Naive thymus-derived CD4-positive, alpha-beta T cell (primary cell): ENCODE measurements at regions of chr12 and their contacts with region 1.

Region 1: DNA sequence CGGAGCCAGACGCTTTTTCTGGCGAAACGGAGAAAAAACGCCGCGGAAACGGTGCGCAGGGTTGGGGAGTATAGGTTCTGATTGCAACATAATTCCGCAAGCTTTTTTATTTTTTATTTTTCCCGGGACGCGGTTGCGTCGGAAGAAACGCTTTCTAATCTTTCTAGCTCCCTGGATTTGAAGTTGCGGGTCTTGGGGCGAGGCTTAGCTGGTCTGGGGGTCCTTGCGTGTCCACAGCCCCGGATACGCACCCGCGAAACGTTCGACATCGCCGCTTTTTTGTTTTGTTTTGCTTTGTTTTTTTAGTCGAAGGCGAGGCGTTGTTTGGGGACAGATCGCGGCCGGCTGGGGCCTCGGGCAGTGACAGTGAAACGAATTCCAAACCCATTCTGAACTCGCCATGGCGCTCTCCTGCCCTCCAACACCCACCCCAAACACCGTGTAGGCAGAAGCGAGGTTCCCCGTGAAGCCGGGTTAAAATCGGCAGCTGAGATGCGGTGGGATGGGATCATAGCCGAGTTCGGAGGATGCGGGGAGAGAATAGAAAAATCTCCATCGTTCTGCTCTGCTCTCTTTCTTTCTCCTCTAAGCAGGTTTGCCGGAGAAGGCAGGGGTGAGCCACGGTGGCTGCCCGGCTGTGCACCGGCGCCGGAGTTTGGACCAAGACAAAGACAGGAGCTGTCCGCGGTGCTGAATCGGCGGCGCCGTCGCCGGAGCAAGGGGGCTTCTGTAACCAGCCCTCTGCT is 8.1 kb upstream of the LHX5 start:
- DNase-seq: peak in 7 of 9 donors; percentile 16 to 58 (median 34)
- ATAC-seq: no peak
- H3K4me3 ChIP-seq: no peak overlapping the region
- H3K4me3 Mint-ChIP-seq: peak overlapping the region in 7 of 10 donors; percentile 16 to 51 (median 25)
- H3K27ac ChIP-seq: no peak overlapping the region
- H3K27ac Mint-ChIP-seq: peak overlapping the region in 2 of 9 donors; percentile 43 to 89
- H3K4me1 ChIP-seq: no peaks in the 10 kb centered on the region
- H3K4me1 Mint-ChIP-seq: peaks cover 5 to 17% (median 12%) of the 10 kb centered on the region in 7 donors
- H3K27me3 ChIP-seq: peaks cover 0 to 14% of the 10 kb centered on the region in 2 donors
- H3K27me3 Mint-ChIP-seq: peaks cover 74 to 89% (median 82%) of the 10 kb centered on the region in 5 donors

Region 2: GRCh38 chr12:112916270-112916669 is 563.5 kb before region 1 on chr12:
- CTCF ChIA-PET with region 1: no interaction called
- POLR2A ChIA-PET with region 1: no interaction called
- intact Hi-C with region 1: no loop called
- DNase-seq: no peak
- ATAC-seq: no peak
- H3K4me3 ChIP-seq: no peak overlapping the region
- H3K4me3 Mint-ChIP-seq: no peak overlapping the region
- H3K27ac ChIP-seq: no peak overlapping the region
- H3K27ac Mint-ChIP-seq: no peak overlapping the region
- H3K4me1 ChIP-seq: peaks cover 0 to 4% of the 10 kb centered on the region in 2 donors
- H3K4me1 Mint-ChIP-seq: peaks cover 6 to 37% (median 25%) of the 10 kb centered on the region in 7 donors
- H3K27me3 ChIP-seq: no peaks in the 10 kb centered on the region
- H3K27me3 Mint-ChIP-seq: no peaks in the 10 kb centered on the region

Region 3: DNA sequence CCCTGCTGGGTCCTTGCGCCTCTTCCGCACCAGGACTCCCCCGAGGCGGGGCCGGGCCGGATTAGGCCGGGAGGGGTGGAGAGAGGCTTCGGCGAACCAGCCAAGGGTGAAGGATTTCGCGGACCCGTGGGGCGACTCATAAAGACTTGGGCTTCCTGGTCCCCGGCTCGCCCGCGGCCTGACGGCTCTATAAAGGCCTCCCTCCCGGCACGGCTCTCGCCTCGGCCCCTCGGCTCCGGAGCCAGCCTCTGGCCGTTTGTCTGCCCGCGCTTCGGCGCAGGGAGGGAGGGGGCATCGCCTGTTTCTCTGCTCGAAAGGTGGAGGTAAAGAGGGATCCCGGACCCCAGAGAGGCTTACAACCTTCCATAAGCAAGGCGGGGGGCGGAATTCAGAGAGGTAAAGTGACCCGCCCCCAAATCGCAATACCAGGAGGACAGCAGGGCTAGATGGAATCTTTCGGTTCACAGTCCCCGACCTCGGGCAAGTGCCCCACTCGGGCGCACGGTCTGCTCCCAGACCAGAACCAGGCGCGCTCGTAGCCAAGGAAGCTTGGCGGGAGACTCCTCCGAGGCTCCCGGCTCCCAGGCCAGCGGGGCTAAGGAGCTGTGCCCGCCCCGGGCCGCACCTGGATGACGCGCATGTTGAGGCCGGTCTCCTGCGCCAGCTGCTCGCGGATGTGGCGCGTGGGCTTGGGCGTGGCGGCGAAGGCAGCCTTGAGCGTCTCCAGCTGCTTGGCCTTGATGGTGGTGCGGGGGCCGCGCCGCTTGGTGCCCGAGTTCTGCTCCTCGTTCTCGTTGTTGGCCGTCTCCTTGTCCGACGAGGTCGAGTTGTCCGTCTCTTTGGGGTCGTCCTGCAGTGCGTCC is 12.0 kb before region 1 on chr12:
- CTCF ChIA-PET with region 1: no interaction called
- POLR2A ChIA-PET with region 1: no interaction called
- intact Hi-C with region 1: loop called in 1 of 2 experiments (anchors 2 kb)
- DNase-seq: no peak
- ATAC-seq: no peak
- H3K4me3 ChIP-seq: no peak overlapping the region
- H3K4me3 Mint-ChIP-seq: peak overlapping the region in 4 of 10 donors; percentile 16 to 59 (median 43)
- H3K27ac ChIP-seq: no peak overlapping the region
- H3K27ac Mint-ChIP-seq: peak overlapping the region in 1 of 9 donors; percentile 23
- H3K4me1 ChIP-seq: peaks cover 6 to 17% of the 10 kb centered on the region in 2 donors
- H3K4me1 Mint-ChIP-seq: peaks cover 10 to 32% (median 25%) of the 10 kb centered on the region in 7 donors
- H3K27me3 ChIP-seq: peaks cover 5% of the 10 kb centered on the region in 2 donors
- H3K27me3 Mint-ChIP-seq: peaks cover 50 to 84% (median 69%) of the 10 kb centered on the region in 5 donors